Head of caudate nucleus (tissue), 42 donors: ENCODE measurements at regions of chr1 and their contacts with region 1.

Region 1: GRCh38 chr1:7667625-7668218 is 103.4 kb upstream of the VAMP3 start:
- DNase-seq: peak; percentile 85 to 99 (median 96)

Region 2: DNA sequence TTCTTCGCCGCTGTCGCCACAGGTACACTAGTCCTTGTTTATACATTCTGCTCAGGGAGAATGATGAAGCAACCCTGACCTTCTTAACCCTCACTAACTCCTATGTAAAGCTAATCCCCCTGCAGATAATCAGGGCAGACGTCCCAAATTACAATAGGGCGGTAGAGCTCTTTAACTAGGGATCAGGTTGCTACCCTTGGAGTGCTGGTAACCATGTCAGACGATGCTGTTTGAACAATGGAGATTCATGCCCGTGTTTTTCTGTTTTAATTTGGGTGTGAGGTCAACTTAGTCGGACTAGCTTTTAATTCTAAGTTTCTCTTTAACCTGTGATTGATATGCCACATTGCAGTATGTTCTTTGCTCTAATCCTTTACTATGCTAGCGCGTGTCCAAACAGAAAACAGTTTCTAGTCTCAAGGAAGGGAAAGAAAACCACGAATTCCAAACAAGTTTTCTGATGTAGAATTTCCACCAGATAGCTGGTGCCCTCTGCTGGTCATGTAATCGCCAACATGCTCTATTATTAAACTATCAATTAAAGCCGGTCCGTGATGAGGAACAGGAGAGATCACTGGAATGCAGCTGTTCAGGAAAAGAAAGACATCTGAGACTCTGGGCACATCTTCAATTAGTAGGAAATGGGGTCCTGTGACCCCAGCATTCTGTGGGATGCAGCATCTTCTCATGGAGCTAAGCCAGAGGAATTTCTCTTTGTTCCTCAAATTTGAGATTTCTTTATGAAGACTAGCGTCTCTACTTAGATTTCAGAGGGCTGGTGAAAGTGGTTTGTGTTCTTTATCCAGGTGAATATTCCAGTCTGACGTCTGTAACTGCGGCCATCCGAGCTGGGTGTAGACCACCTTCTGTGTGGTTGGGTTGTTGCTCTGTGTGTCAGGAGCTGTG is 85.0 kb after region 1 on chr1:
- intact Hi-C with region 1: loop called (anchors 2 kb)
- DNase-seq: peak in 41 of 42 donors; percentile 14 to 92 (median 74)

Region 3: DNA sequence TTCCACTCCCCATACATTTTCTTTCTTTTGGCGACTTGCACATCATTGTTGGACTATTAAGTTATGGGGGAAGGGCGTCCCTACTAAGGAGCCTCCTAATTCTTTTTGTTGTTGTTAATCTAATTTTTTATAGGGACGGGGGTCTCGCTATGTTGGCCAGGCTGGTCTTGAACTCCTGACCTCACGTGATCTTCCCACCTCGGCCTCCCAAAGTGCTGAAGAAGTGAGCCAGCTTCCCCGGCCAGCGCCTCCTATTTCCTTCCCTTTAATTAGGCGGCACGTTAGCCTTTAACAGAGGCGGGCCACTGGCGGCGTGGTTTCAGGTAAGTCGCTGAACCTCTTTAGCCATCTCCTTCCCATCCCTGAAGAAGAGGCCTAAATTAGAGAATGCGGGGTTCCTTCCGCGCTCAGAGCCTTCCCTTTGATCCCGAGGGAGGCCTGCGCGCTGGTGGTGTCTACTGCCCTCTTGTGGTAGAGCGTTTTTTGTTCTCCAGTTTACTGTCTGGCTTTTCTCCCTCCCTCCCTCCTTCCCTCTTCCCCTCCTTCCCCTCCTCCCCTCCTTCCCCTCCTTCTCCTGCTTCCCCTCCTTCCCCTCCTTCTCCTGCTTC is 234.9 kb after region 1 on chr1:
- intact Hi-C with region 1: loop called (anchors 5 kb)
- DNase-seq: peak; percentile 28 to 87 (median 71)